Heart right ventricle (tissue), 16 donors: ENCODE measurements at regions of chr14 and their contacts with region 1.

Region 1: GRCh38 chr14:71753126-71753830 is 179.0 kb upstream of the RGS6 start:
- DNase-seq: peak; percentile 89 to 96
- ATAC-seq: peak; percentile 81 to 94 (median 87)
- H3K4me3 ChIP-seq: peak overlapping the region in 3 of 10 donors; percentile 1 to 24 (median 18)
- H3K27ac ChIP-seq: peak overlapping the region in 1 of 10 donors; percentile 22
- H3K4me1 ChIP-seq: peaks cover 0 to 11% (median 10%) of the 10 kb centered on the region in 9 donors
- H3K27me3 ChIP-seq: no peaks in the 10 kb centered on the region
- CTCF ChIP-seq: peak; percentile 81 to 99 (median 95)

Region 2: DNA sequence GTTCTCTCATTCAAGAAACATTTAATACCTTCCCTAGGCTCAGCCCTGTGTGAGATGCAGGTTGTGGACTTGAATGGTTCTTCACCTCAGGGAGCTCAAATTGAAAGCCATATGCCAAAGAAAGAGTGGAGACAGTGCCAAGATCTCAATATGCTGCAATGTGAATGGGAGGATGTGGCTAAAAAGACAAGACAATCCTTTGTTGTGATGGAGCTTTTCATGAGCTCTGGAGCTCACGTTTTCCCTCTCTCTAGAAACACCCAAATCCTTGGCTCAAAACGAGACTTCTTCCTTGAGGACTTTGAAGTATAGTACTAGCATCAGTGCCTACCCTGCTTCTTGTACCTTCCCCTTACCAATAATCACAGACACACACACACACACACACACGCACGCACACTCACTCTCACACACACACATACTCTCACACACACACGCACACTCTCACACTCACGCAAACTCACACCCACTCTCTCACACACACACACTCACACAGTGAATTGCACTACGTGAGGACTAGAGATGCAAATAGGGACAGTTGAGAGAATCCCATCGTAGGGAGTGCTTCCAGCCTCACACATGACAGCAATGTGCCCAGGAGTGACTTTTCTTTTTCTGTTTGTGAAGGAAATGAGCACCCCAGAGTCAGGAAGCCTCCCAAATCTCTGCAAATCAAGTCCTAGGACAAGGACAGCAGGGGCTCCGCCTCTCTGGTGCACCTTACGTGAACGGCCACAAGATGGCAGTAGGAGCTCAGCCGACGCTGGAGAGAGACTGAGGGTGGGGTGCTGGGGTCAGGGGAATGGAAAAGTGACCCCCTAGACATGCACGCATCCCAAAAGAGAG is 614.6 kb before region 1 on chr14:
- intact Hi-C with region 1: loop called (anchors 1 to 5 kb)
- DNase-seq: peak; percentile 31 to 44
- ATAC-seq: peak; percentile 63 to 88 (median 82)
- H3K4me3 ChIP-seq: peak overlapping the region in 1 of 10 donors; percentile 24
- H3K27ac ChIP-seq: no peak overlapping the region
- H3K4me1 ChIP-seq: peaks cover 0 to 33% (median 0%) of the 10 kb centered on the region in 9 donors
- H3K27me3 ChIP-seq: no peaks in the 10 kb centered on the region
- CTCF ChIP-seq: peak; percentile 89 to 98 (median 93)

Region 3: GRCh38 chr14:71668186-71668912 is 84.9 kb before region 1 on chr14:
- intact Hi-C with region 1: no loop called
- DNase-seq: no peak
- ATAC-seq: no peak
- H3K4me3 ChIP-seq: no peak overlapping the region
- H3K27ac ChIP-seq: no peak overlapping the region
- H3K4me1 ChIP-seq: no peaks in the 10 kb centered on the region
- H3K27me3 ChIP-seq: no peaks in the 10 kb centered on the region
- CTCF ChIP-seq: no peak

Region 4: GRCh38 chr14:71799841-71800240 is 46.6 kb after region 1 on chr14:
- intact Hi-C with region 1: no loop called
- DNase-seq: no peak
- ATAC-seq: no peak
- H3K4me3 ChIP-seq: no peak overlapping the region
- H3K27ac ChIP-seq: no peak overlapping the region
- H3K4me1 ChIP-seq: no peaks in the 10 kb centered on the region
- H3K27me3 ChIP-seq: no peaks in the 10 kb centered on the region
- CTCF ChIP-seq: no peak

Region 5: GRCh38 chr14:71833476-71833875 is 80.2 kb after region 1 on chr14:
- intact Hi-C with region 1: no loop called
- DNase-seq: no peak
- ATAC-seq: no peak
- H3K4me3 ChIP-seq: no peak overlapping the region
- H3K27ac ChIP-seq: no peak overlapping the region
- H3K4me1 ChIP-seq: peaks cover 0 to 11% (median 3%) of the 10 kb centered on the region in 9 donors
- H3K27me3 ChIP-seq: no peaks in the 10 kb centered on the region
- CTCF ChIP-seq: no peak